Activated CD4-positive, alpha-beta memory T cell treated with anti-CD3 and anti-CD28 coated beads for 36 hours (primary cell): ENCODE measurements at regions of chr15 and their contacts with region 1.

Region 1: GRCh38 chr15:90286678-90287077 is 21.2 kb downstream of the NGRN start:
- DNase-seq: peak; percentile 48
- H3K4me3 Mint-ChIP-seq: no peak overlapping the region
- H3K27ac Mint-ChIP-seq: no peak overlapping the region
- H3K4me1 Mint-ChIP-seq: no peaks in the 10 kb centered on the region
- H3K27me3 Mint-ChIP-seq: no peaks in the 10 kb centered on the region

Region 2: GRCh38 chr15:90071208-90071807 is 215.4 kb before region 1 on chr15:
- CTCF ChIA-PET with region 1: no interaction called
- POLR2A ChIA-PET with region 1: no interaction called
- intact Hi-C with region 1: no loop called
- DNase-seq: peak; percentile 84
- H3K4me3 Mint-ChIP-seq: no peak overlapping the region
- H3K27ac Mint-ChIP-seq: no peak overlapping the region
- H3K4me1 Mint-ChIP-seq: peaks cover 21% of the 10 kb centered on the region
- H3K27me3 Mint-ChIP-seq: no peaks in the 10 kb centered on the region

Region 3: GRCh38 chr15:90143166-90143655 is 143.5 kb before region 1 on chr15:
- CTCF ChIA-PET with region 1: interaction called, 3 read pairs
- POLR2A ChIA-PET with region 1: no interaction called
- intact Hi-C with region 1: loop called (anchors 1 kb)
- DNase-seq: peak; percentile 85
- H3K4me3 Mint-ChIP-seq: no peak overlapping the region
- H3K27ac Mint-ChIP-seq: peak overlapping the region; percentile 39
- H3K4me1 Mint-ChIP-seq: peaks cover 20% of the 10 kb centered on the region
- H3K27me3 Mint-ChIP-seq: no peaks in the 10 kb centered on the region

Region 4: DNA sequence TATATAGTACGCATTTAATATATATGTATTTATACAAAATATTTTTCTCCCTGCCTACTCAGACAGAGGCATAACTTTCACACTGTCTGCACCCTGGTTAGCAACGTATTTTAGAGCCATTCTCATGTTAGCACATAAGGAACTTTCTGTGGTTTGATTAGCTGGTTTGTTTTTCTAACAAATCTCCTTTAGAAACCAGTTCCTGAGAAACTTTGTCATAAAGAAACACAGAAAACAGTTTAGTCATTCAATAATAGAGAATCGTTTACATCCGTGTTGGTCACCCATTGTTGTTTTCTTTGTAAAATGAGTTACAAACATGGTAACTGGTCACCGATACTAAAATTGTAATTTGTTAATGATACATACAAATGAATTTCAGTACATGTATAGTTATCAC is 27.2 kb before region 1 on chr15:
- CTCF ChIA-PET with region 1: no interaction called
- POLR2A ChIA-PET with region 1: no interaction called
- intact Hi-C with region 1: no loop called
- DNase-seq: no peak
- H3K4me3 Mint-ChIP-seq: no peak overlapping the region
- H3K27ac Mint-ChIP-seq: no peak overlapping the region
- H3K4me1 Mint-ChIP-seq: peaks cover 11% of the 10 kb centered on the region
- H3K27me3 Mint-ChIP-seq: no peaks in the 10 kb centered on the region